ENCODE measurements at regions of chr9 and their contacts with region 1.

Region 1: GRCh38 chr9:72497447-72498046 is 23.9 kb upstream of the TMC1 start:
- DNase-seq: no peak
- H3K4me3 ChIP-seq: no peak overlapping the region
- H3K27ac ChIP-seq: no peak overlapping the region
- H3K4me1 ChIP-seq: no peaks in the 10 kb centered on the region
- H3K27me3 ChIP-seq: no peaks in the 10 kb centered on the region
- CTCF ChIP-seq: no peak

Region 2: GRCh38 chr9:72254901-72255535 is 242.5 kb before region 1 on chr9:
- CTCF ChIA-PET with region 1: no interaction called
- dilution Hi-C with region 1: no loop called
- in situ Hi-C with region 1: no loop called
- intact Hi-C with region 1: no loop called
- DNase-seq: no peak
- H3K4me3 ChIP-seq: no peak overlapping the region
- H3K27ac ChIP-seq: no peak overlapping the region
- H3K4me1 ChIP-seq: peaks cover 7% of the 10 kb centered on the region
- H3K27me3 ChIP-seq: no peaks in the 10 kb centered on the region
- CTCF ChIP-seq: no peak

Region 3: GRCh38 chr9:72401396-72401795 is 96.2 kb before region 1 on chr9:
- CTCF ChIA-PET with region 1: no interaction called
- dilution Hi-C with region 1: loop called (anchors 10 kb)
- in situ Hi-C with region 1: no loop called
- intact Hi-C with region 1: no loop called
- DNase-seq: no peak
- H3K4me3 ChIP-seq: no peak overlapping the region
- H3K27ac ChIP-seq: no peak overlapping the region
- H3K4me1 ChIP-seq: peaks cover 4% of the 10 kb centered on the region
- H3K27me3 ChIP-seq: no peaks in the 10 kb centered on the region
- CTCF ChIP-seq: no peak

Region 4: GRCh38 chr9:72428329-72428728 is 69.2 kb before region 1 on chr9:
- CTCF ChIA-PET with region 1: no interaction called
- dilution Hi-C with region 1: no loop called
- in situ Hi-C with region 1: no loop called
- intact Hi-C with region 1: no loop called
- DNase-seq: peak; percentile 16
- H3K4me3 ChIP-seq: no peak overlapping the region
- H3K27ac ChIP-seq: no peak overlapping the region
- H3K4me1 ChIP-seq: peaks cover 15% of the 10 kb centered on the region
- H3K27me3 ChIP-seq: no peaks in the 10 kb centered on the region
- CTCF ChIP-seq: no peak

Region 5: GRCh38 chr9:72597181-72597517 is 99.6 kb after region 1 on chr9:
- CTCF ChIA-PET with region 1: no interaction called
- dilution Hi-C with region 1: no loop called
- in situ Hi-C with region 1: no loop called
- intact Hi-C with region 1: no loop called
- DNase-seq: no peak
- H3K4me3 ChIP-seq: no peak overlapping the region
- H3K27ac ChIP-seq: no peak overlapping the region
- H3K4me1 ChIP-seq: no peaks in the 10 kb centered on the region
- H3K27me3 ChIP-seq: no peaks in the 10 kb centered on the region
- CTCF ChIP-seq: no peak

Measured in mammary epithelial cell (primary cell).